Gastrocnemius medialis (tissue), 4 donors: ENCODE measurements at regions of chr6 and their contacts with region 1.

Region 1: GRCh38 chr6:87589693-87590549 is at the starts of genes ORC3 and RARS2:
- DNase-seq: peak; percentile 94 to 95
- ATAC-seq: peak; percentile 99
- H3K4me3 ChIP-seq: peak within 1 kb of the TSS; percentile 73 to 94 (median 84)
- H3K27ac ChIP-seq: peak within 1 kb of the TSS; percentile 85 to 91 (median 88)
- H3K4me1 ChIP-seq: peaks cover 31 to 32% of the 10 kb centered on the region in 2 donors
- H3K27me3 ChIP-seq: no peaks in the 10 kb centered on the region
- CTCF ChIP-seq: no peak
- POLR2A ChIP-seq: peak; percentile 84 to 91
- total RNA-seq, gene ORC3: 18.6 to 28.5 (median 22.6) TPM
- total RNA-seq, gene RARS2: 11.4 to 21.1 (median 13.4) TPM

Region 2: GRCh38 chr6:87001494-87001893 is 588.4 kb before region 1 on chr6:
- in situ Hi-C with region 1: no loop called
- intact Hi-C with region 1: no loop called
- DNase-seq: no peak
- ATAC-seq: no peak
- H3K4me3 ChIP-seq: no peak overlapping the region
- H3K27ac ChIP-seq: no peak overlapping the region
- H3K4me1 ChIP-seq: no peaks in the 10 kb centered on the region
- H3K27me3 ChIP-seq: no peaks in the 10 kb centered on the region
- CTCF ChIP-seq: no peak
- POLR2A ChIP-seq: no peak

Region 3: GRCh38 chr6:87407901-87408720 is 181.8 kb before region 1 on chr6 and contains the start of gene CFAP206:
- in situ Hi-C with region 1: no loop called
- intact Hi-C with region 1: loop called (anchors 10 kb)
- DNase-seq: peak; percentile 58 to 63
- ATAC-seq: peak; percentile 87 to 88
- H3K4me3 ChIP-seq: peak within 1 kb of the TSS; percentile 72 to 98 (median 96)
- H3K27ac ChIP-seq: peak within 1 kb of the TSS; percentile 72 to 89 (median 81)
- H3K4me1 ChIP-seq: peaks cover 3 to 9% of the 10 kb centered on the region in 2 donors
- H3K27me3 ChIP-seq: no peaks in the 10 kb centered on the region
- CTCF ChIP-seq: no peak
- POLR2A ChIP-seq: no peak
- total RNA-seq, gene CFAP206: 0.20 to 1.6 TPM in 2 of 4 donors, not detected in the others

Region 4: DNA sequence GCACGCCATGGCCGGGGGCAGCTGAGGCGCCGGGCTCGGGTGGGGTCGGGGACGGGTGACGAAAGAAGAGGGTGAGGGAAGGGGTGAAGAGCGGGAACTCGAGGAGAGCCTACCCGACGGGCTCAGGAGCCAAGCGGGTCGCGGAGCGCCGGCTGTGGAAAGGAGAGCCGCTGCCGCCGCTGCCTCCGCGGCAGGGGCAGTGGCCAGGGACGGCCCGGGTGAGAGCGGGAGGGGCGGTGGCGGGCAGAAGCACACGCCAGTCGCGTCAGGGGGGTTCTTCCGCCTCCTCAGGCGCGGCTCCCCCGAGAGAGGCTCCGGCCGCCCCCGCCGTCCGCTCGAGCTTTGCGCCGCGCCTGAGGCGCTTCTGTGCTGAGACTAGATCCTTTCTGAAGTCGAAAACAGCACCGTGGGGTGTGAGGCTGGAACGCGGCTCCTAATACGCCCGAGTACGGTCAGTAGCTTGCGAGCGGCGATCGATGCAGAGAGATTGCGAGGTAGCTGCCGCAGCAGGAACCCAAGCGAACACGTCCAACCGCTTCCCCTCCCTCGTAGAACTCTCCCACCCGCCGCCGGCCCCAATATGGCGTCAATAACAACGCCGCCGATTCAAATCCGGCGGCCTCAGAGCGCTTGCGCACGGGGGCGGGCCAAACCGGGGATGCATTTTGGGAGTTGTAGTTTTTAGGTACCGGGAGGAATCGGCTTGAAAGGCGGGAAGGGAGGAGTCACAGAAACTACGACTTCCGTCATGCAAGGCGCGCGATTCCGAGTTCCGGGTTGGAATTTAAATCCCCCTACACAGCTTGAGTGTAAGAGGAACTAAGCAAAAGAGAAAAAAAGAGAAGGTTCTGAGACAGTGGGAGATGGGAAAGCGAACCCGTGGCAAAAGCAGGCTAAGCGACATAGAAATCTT is 112.0 kb after region 1 on chr6 and contains the start of gene AKIRIN2:
- in situ Hi-C with region 1: no loop called
- intact Hi-C with region 1: loop called (anchors 1 kb)
- DNase-seq: peak; percentile 97
- ATAC-seq: peak; percentile 80 to 81
- H3K4me3 ChIP-seq: peak within 1 kb of the TSS; percentile 86 to 94 (median 94)
- H3K27ac ChIP-seq: peak within 1 kb of the TSS; percentile 94 to 99 (median 97)
- H3K4me1 ChIP-seq: peaks cover 24 to 32% of the 10 kb centered on the region in 2 donors
- H3K27me3 ChIP-seq: no peaks in the 10 kb centered on the region
- CTCF ChIP-seq: no peak
- POLR2A ChIP-seq: peak; percentile 99 to 100
- total RNA-seq, gene AKIRIN2: 25.6 to 44.5 (median 33.1) TPM

Region 5: DNA sequence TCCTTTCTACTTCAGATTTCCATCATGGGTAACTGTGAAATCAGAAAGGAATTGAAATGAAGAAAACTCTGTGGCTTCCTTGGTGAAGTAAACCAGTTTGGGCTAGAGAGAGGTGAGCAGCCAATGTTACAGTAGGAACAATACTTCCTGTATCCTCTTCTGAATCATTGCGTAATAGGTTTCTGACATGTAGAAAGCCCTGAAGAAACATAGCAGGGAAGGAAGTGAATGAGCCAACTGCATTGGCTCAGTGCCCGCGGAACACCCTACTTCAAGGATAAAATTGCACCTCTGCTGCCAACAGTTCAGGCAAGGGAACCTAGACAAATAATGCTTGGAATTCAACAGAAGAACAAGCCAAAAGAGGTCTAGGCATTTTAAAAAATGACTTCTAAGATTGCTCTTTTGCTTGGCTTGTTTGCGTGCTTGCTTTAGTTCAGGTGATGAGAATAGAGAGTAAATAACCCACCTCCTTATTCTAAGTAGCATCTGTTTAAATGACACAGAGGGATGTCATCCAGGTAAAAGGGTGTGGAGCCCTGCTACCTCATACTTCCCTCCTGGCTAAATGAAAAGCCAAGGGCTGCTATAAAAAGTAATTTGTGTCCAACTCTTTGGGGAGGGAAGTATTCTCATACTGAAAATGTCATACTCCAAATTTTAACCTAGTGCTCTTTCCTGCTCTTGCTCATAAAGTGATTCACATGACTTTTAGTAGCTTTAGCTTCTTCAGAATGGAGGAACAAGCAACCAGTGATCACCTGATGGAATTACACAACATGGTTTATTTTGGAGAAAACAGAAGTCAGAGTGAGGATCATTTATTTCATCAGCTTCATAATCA is 142.1 kb after region 1 on chr6:
- in situ Hi-C with region 1: no loop called
- intact Hi-C with region 1: loop called (anchors 5 kb)
- DNase-seq: peak; percentile 91 to 97
- ATAC-seq: peak; percentile 88 to 90
- H3K4me3 ChIP-seq: peak overlapping the region in 1 of 4 donors; percentile 41
- H3K27ac ChIP-seq: peak overlapping the region; percentile 88 to 97 (median 90)
- H3K4me1 ChIP-seq: peaks cover 41 to 42% of the 10 kb centered on the region in 2 donors
- H3K27me3 ChIP-seq: no peaks in the 10 kb centered on the region
- CTCF ChIP-seq: no peak
- POLR2A ChIP-seq: no peak

Region 6: DNA sequence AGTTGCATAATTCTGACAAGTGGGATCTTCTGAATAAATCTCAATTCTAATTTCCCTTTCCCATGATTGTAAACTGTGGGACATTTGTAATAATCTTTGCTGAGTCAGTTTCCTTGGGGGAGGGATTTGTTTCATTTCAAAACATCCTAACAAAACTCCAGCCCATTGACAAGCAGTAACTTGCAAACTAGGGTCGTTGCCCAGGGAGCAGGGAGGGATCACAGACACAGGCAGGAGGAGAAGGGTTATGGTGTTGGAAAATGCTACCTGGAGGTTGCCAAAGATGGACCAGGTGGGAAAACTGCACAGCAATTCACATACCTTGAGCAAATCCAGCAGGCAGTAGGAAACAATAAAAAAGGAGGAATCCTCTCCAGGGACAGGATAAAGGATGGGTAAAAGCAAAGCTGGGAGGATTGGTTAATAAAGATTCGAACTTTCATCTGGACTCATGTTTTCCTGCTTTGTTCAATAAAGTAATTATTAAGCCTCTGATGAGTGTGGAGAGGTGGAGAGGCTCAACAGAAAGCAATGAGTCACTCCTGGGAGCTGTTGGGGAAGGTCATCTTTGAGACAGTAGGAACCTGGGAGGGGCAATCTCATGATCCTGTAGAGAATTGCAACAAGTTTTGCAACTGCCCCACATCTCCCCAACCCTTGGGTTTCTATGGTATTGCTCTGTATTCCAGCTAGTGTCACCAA is 199.4 kb after region 1 on chr6:
- in situ Hi-C with region 1: loop called in 1 of 4 experiments (anchors 25 kb)
- intact Hi-C with region 1: loop called (anchors 10 kb)
- DNase-seq: no peak
- ATAC-seq: peak; percentile 62 to 70
- H3K4me3 ChIP-seq: no peak overlapping the region
- H3K27ac ChIP-seq: no peak overlapping the region
- H3K4me1 ChIP-seq: no peaks in the 10 kb centered on the region
- H3K27me3 ChIP-seq: no peaks in the 10 kb centered on the region
- CTCF ChIP-seq: no peak
- POLR2A ChIP-seq: no peak

Region 7: DNA sequence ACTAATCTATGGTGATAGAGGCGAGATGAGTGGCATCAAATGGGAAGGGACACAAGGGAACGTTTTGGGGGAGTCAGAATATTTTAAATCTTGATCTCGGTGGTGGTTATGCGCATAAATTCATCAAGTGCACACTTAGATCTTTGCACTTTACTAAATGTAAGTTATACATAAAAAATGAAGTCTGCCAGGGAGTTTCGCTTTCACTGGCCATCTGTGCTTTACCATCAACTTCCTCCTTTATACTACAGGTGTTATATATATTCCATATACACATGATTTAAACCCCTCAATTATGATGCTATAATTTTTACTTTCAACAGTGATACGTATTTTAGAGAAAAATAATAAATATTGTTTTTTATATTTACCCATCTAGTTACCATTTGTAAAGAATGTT is 209.7 kb after region 1 on chr6:
- in situ Hi-C with region 1: loop called in 1 of 4 experiments (anchors 25 kb)
- intact Hi-C with region 1: loop called (anchors 10 kb)
- DNase-seq: no peak
- ATAC-seq: no peak
- H3K4me3 ChIP-seq: no peak overlapping the region
- H3K27ac ChIP-seq: no peak overlapping the region
- H3K4me1 ChIP-seq: no peaks in the 10 kb centered on the region
- H3K27me3 ChIP-seq: no peaks in the 10 kb centered on the region
- CTCF ChIP-seq: no peak
- POLR2A ChIP-seq: no peak